ENCODE measurements at regions of chr6 and their contacts with region 1.

Region 1: DNA sequence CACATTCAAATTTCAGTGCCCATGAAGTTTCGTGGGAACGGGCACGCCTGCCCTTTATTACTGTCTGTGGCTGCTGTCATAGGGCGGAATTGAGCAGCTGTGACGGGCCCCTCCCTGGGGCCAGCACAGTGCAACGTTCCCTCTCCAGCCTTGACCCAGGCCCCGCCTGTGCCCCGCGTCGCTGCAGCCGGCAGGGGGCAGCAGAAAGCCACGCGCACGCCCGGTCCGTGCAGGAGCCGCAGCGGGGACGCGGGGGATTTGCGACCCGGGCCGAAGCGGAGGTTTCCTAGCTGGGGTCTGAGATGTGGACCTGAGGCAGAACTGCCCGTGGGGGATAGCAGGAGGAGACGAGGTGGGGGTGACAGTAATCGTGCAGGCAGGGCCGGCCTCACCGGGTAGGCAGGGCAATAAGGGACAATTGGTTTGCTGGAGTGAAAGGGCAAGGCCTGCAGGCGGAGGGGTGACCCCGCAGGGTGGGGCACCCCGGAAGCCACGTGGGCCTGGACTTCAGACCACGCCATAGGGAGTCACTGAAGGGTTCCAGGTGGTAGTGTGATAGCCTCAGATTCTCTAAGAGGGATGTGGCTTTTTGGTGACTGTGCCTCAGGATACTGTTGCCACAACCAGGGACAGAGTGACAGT is 54.4 kb downstream of the SYTL3 start:
- DNase-seq: peak; percentile 87
- H3K4me3 ChIP-seq: peak overlapping the region in 3 of 4 donors; percentile 38 to 44 (median 43)
- H3K27ac ChIP-seq: peak overlapping the region; percentile 18 to 82 (median 62)
- H3K4me1 ChIP-seq: peaks cover 0 to 51% (median 47%) of the 10 kb centered on the region in 4 donors
- H3K27me3 ChIP-seq: no peaks in the 10 kb centered on the region
- CTCF ChIP-seq: peak; percentile 91 to 99 (median 96)
- EP300 ChIP-seq: no peak
- POLR2A ChIP-seq: no peak

Region 2: GRCh38 chr6:158752613-158753012 is 48.3 kb after region 1 on chr6:
- intact Hi-C with region 1: loop called (anchors 5 kb)
- DNase-seq: peak; percentile 78
- H3K4me3 ChIP-seq: no peak overlapping the region
- H3K27ac ChIP-seq: peak overlapping the region in 1 of 4 donors; percentile 41
- H3K4me1 ChIP-seq: peaks cover 0 to 12% (median 10%) of the 10 kb centered on the region in 4 donors
- H3K27me3 ChIP-seq: no peaks in the 10 kb centered on the region
- CTCF ChIP-seq: no peak
- EP300 ChIP-seq: no peak
- POLR2A ChIP-seq: no peak

Region 3: GRCh38 chr6:158819213-158819909 is 115.1 kb after region 1 on chr6 and contains the start of gene EZR:
- intact Hi-C with region 1: loop called (anchors 2 kb)
- DNase-seq: peak; percentile 86
- H3K4me3 ChIP-seq: peak within 1 kb of the TSS; percentile 74 to 97 (median 81)
- H3K27ac ChIP-seq: peak within 1 kb of the TSS; percentile 95 to 99 (median 96)
- H3K4me1 ChIP-seq: peaks cover 0 to 32% (median 24%) of the 10 kb centered on the region in 4 donors
- H3K27me3 ChIP-seq: no peaks in the 10 kb centered on the region
- CTCF ChIP-seq: no peak
- EP300 ChIP-seq: no peak
- POLR2A ChIP-seq: no peak
- total RNA-seq, gene EZR: 33.5 to 46.0 (median 38.3) TPM

Region 4: GRCh38 chr6:158869826-158870648 is 165.7 kb after region 1 on chr6:
- intact Hi-C with region 1: loop called (anchors 5 kb)
- DNase-seq: peak; percentile 91
- H3K4me3 ChIP-seq: peak overlapping the region; percentile 25 to 51 (median 46)
- H3K27ac ChIP-seq: peak overlapping the region; percentile 76 to 84 (median 78)
- H3K4me1 ChIP-seq: peaks cover 0 to 15% (median 2%) of the 10 kb centered on the region in 4 donors
- H3K27me3 ChIP-seq: no peaks in the 10 kb centered on the region
- CTCF ChIP-seq: no peak
- EP300 ChIP-seq: no peak
- POLR2A ChIP-seq: no peak

Region 5: GRCh38 chr6:158972241-158973233 is 268.2 kb after region 1 on chr6:
- intact Hi-C with region 1: loop called (anchors 1 kb)
- DNase-seq: no peak
- H3K4me3 ChIP-seq: no peak overlapping the region
- H3K27ac ChIP-seq: no peak overlapping the region
- H3K4me1 ChIP-seq: peaks cover 0 to 5% (median 0%) of the 10 kb centered on the region in 4 donors
- H3K27me3 ChIP-seq: no peaks in the 10 kb centered on the region
- CTCF ChIP-seq: peak; percentile 26 to 55 (median 43)
- EP300 ChIP-seq: no peak
- POLR2A ChIP-seq: no peak

Region 6: DNA sequence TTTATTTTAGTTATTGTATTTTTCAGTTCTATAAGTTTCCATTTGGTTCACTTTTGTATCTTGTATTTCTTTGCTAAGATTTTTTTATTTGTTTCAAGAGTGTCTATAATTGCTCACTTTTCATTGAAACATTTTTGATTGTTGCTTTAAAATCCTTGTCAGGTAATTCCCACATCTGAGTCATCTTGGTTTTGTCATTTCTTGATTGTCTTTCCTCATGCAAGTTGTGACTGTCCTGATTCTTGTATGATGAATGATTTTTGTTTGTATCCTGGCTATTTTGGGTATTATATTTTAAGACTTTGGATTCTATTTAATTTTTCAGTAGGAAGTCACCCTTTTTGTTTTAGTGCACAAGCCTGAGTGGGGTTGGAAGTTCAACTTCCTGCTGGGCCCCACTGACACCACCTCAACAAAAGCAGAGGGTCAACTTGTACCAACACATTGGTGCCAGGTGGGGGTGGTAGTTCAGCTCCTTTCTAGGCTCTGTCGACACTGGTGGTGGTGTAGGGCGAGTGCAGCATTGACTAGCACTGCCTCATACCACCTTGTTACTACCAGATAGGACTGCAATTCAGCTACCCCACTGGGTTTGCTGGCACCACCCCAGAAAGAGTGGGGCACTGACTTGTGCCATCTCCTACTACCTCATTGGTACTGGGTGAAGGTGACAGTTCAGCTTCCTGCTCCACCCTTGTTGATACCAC is 286.9 kb after region 1 on chr6:
- intact Hi-C with region 1: no loop called
- DNase-seq: no peak
- H3K4me3 ChIP-seq: no peak overlapping the region
- H3K27ac ChIP-seq: no peak overlapping the region
- H3K4me1 ChIP-seq: no peaks in the 10 kb centered on the region
- H3K27me3 ChIP-seq: no peaks in the 10 kb centered on the region
- CTCF ChIP-seq: no peak
- EP300 ChIP-seq: no peak
- POLR2A ChIP-seq: no peak

Region 7: GRCh38 chr6:159104163-159104925 is 400.0 kb after region 1 on chr6:
- intact Hi-C with region 1: loop called (anchors 10 kb)
- DNase-seq: peak; percentile 75
- H3K4me3 ChIP-seq: no peak overlapping the region
- H3K27ac ChIP-seq: no peak overlapping the region
- H3K4me1 ChIP-seq: peaks cover 0 to 6% (median 2%) of the 10 kb centered on the region in 4 donors
- H3K27me3 ChIP-seq: no peaks in the 10 kb centered on the region
- CTCF ChIP-seq: peak; percentile 31 to 80 (median 71)
- EP300 ChIP-seq: no peak
- POLR2A ChIP-seq: no peak

Region 8: DNA sequence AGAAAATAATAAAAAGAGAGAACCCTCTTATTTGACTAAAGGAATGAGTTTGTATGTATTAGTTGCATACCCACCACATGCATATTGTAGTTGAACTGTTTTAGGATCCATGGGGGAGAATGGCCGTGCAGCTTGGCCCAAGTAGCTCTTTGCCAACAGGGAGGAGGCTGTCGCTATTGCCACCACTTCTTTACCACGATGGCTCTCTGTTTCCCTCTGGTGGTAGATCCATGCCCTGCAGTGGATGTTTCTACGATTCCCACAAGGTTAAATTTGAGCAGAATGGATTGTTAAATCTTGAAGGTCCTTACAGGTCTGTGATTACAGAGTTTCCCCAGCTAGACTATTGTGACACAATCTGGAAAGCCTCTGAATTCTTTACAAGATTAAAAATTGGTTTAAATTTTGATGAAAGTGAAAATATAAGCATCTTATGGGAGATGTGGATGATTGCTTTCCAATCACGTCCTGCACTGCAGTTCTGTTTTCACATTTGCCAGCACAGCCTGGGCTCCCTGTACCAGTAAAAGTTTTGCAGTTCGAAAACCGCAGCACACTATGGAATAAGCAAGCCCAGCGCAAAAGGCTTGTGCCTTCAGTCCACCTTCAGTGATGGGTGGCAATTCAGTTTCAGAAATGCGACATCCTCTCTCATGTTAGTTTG is 430.5 kb after region 1 on chr6:
- intact Hi-C with region 1: loop called (anchors 10 kb)
- DNase-seq: no peak
- H3K4me3 ChIP-seq: no peak overlapping the region
- H3K27ac ChIP-seq: no peak overlapping the region
- H3K4me1 ChIP-seq: no peaks in the 10 kb centered on the region
- H3K27me3 ChIP-seq: no peaks in the 10 kb centered on the region
- CTCF ChIP-seq: peak; percentile 34 to 88 (median 72)
- EP300 ChIP-seq: no peak
- POLR2A ChIP-seq: no peak

Measured in sigmoid colon (tissue), 7 donors.